B cell (primary cell): ENCODE measurements at regions of chr4 and their contacts with region 1.

Region 1: GRCh38 chr4:85701861-85702321 is 226.9 kb downstream of the ARHGAP24 start:
- DNase-seq: peak; percentile 82
- ATAC-seq: peak; percentile 88
- H3K4me3 ChIP-seq: peak overlapping the region in 3 of 5 experiments; percentile 17 to 53 (median 25)
- H3K4me3 Mint-ChIP-seq: peak overlapping the region; percentile 73
- H3K27ac ChIP-seq: peak overlapping the region; percentile 85 to 86
- H3K27ac Mint-ChIP-seq: peak overlapping the region; percentile 92
- H3K4me1 ChIP-seq: peaks cover 59 to 60% of the 10 kb centered on the region in 2 donors
- H3K4me1 Mint-ChIP-seq: peaks cover 64% of the 10 kb centered on the region
- H3K27me3 ChIP-seq: no peaks in the 10 kb centered on the region
- H3K27me3 Mint-ChIP-seq: no peaks in the 10 kb centered on the region
- CTCF ChIP-seq: no peak

Region 2: DNA sequence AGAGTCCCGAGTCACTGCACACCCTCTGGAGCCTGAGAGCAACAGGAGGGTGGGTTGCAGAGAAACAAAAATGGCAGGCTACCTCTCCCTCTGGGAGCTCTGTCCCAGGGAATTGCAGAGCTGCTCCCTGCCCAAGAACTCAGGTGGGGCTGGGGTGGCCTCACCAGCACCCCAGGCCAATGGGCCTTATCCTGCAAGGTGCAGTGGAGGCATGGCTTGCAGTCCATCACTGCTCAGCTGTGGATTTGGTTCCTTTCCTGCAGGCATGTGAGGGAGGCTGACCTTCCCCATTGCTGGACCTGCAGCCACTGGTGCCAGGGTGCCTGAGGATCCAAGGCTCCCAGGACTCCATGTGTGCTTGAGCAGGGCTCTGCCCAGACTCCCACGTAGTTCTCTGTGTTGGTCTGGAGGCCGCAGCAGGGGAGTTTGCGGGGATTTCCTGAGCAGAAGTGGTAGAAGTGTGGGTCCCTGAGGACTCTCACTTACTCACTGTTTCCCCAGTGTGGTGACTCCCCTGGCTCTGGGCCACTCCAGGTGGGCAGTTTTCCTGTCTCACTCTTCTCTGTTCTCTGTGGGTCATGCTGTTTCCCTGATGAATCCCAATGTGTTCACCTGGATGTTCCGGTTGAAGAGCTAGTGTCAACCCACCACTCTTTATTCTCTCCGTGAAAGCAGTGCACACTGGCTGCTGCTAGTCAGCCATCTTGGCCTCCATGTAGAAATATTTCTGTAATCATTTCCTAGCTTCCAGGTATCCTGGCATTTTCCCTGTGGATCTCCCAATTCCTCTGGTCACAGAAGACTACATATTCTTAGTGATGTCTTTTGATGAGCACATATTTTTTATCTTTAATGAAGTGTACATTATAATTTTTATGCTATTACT is 144.6 kb before region 1 on chr4:
- CTCF ChIA-PET with region 1: no interaction called
- POLR2A ChIA-PET with region 1: no interaction called
- intact Hi-C with region 1: loop called (anchors 1 kb)
- DNase-seq: peak; percentile 93
- ATAC-seq: peak; percentile 86
- H3K4me3 ChIP-seq: peak overlapping the region in 2 of 5 experiments; percentile 12 to 14
- H3K4me3 Mint-ChIP-seq: peak overlapping the region; percentile 66
- H3K27ac ChIP-seq: peak overlapping the region; percentile 92 to 95
- H3K27ac Mint-ChIP-seq: peak overlapping the region; percentile 96
- H3K4me1 ChIP-seq: peaks cover 61 to 62% of the 10 kb centered on the region in 2 donors
- H3K4me1 Mint-ChIP-seq: peaks cover 72% of the 10 kb centered on the region
- H3K27me3 ChIP-seq: no peaks in the 10 kb centered on the region
- H3K27me3 Mint-ChIP-seq: no peaks in the 10 kb centered on the region
- CTCF ChIP-seq: no peak

Region 3: GRCh38 chr4:85603437-85604336 is 98.2 kb before region 1 on chr4:
- CTCF ChIA-PET with region 1: no interaction called
- POLR2A ChIA-PET with region 1: no interaction called
- intact Hi-C with region 1: loop called (anchors 5 kb)
- DNase-seq: peak; percentile 72
- ATAC-seq: peak; percentile 42
- H3K4me3 ChIP-seq: peak overlapping the region in 1 of 5 experiments; percentile 6
- H3K4me3 Mint-ChIP-seq: peak overlapping the region; percentile 62
- H3K27ac ChIP-seq: peak overlapping the region; percentile 60 to 91
- H3K27ac Mint-ChIP-seq: peak overlapping the region; percentile 86
- H3K4me1 ChIP-seq: peaks cover 45 to 46% of the 10 kb centered on the region in 2 donors
- H3K4me1 Mint-ChIP-seq: peaks cover 40% of the 10 kb centered on the region
- H3K27me3 ChIP-seq: no peaks in the 10 kb centered on the region
- H3K27me3 Mint-ChIP-seq: no peaks in the 10 kb centered on the region
- CTCF ChIP-seq: no peak

Region 4: DNA sequence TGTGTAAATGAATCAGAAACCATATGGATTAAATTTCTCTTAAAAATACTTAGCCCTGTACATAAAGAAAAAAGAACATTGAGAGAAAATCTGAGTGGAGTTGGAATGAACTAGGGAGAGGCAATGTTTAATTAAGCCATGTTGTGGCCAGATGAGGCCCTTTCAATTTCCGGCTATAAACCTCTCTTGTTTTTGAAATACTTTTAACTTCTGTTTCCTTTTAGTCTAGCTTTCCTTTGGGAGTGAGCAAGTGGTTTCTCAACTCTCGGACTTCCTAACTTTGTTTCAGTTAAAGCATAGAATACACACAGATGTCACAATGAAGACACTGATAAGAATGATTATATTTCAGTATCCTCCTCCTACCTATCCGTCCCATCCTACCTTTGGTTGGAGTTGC is 29.8 kb before region 1 on chr4:
- CTCF ChIA-PET with region 1: interaction called, 7 read pairs
- POLR2A ChIA-PET with region 1: no interaction called
- intact Hi-C with region 1: loop called (anchors 5 kb)
- DNase-seq: no peak
- ATAC-seq: no peak
- H3K4me3 ChIP-seq: peak overlapping the region in 1 of 5 experiments; percentile 22
- H3K4me3 Mint-ChIP-seq: peak overlapping the region; percentile 35
- H3K27ac ChIP-seq: peak overlapping the region; percentile 42 to 65
- H3K27ac Mint-ChIP-seq: peak overlapping the region; percentile 51
- H3K4me1 ChIP-seq: peaks cover 69 to 72% of the 10 kb centered on the region in 2 donors
- H3K4me1 Mint-ChIP-seq: peaks cover 76% of the 10 kb centered on the region
- H3K27me3 ChIP-seq: no peaks in the 10 kb centered on the region
- H3K27me3 Mint-ChIP-seq: no peaks in the 10 kb centered on the region
- CTCF ChIP-seq: no peak

Region 5: DNA sequence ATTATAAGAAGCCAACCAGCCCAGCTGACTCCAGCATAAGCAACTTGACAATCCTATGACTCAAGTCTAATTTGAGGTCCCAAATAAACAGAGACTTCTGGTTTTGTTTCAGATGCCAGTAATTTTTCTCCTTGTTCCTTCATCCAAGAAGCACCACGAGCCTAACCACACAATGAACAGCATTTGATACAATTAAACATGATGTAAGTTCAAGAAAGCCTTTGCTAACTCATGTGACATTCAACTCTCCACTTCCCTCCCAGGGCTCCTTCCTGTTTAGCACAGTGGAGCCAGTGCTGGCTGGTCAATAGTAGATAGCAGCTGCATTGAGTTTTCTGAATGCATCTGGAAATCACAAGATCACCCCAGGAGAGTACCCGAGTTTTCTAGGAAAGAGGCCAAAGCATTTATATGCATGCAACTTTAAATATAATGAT is 20.7 kb before region 1 on chr4:
- CTCF ChIA-PET with region 1: interaction called, 7 read pairs
- POLR2A ChIA-PET with region 1: no interaction called
- intact Hi-C with region 1: loop called (anchors 2 kb)
- DNase-seq: peak; percentile 66
- ATAC-seq: peak; percentile 70
- H3K4me3 ChIP-seq: no peak overlapping the region
- H3K4me3 Mint-ChIP-seq: peak overlapping the region; percentile 57
- H3K27ac ChIP-seq: peak overlapping the region; percentile 69 to 84
- H3K27ac Mint-ChIP-seq: peak overlapping the region; percentile 86
- H3K4me1 ChIP-seq: peaks cover 45 to 50% of the 10 kb centered on the region in 2 donors
- H3K4me1 Mint-ChIP-seq: peaks cover 56% of the 10 kb centered on the region
- H3K27me3 ChIP-seq: no peaks in the 10 kb centered on the region
- H3K27me3 Mint-ChIP-seq: no peaks in the 10 kb centered on the region
- CTCF ChIP-seq: no peak

Region 6: DNA sequence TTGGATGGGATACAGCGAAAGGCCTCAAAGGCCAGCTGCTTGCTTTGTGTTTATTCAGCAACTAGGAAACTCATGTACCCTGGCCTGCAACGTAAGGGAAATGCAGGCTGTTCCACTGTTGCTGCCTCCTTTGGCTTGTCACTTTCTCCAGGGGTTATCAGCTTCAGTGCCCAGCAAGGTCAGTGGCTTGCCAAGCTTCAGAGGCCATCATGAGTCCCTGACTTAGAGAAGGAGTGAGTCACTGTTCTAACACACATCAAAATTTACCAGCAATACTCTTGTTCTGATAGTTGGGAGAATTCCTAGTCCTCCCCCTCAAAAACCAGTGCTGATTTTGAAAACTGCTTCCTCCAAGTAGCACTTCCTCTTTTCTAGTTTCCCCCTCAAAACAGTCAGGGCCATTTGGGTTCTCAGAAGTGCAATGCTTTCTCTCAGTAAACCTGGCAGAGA is 23.9 kb after region 1 on chr4:
- CTCF ChIA-PET with region 1: interaction called, 6 read pairs
- POLR2A ChIA-PET with region 1: no interaction called
- intact Hi-C with region 1: loop called (anchors 1 kb)
- DNase-seq: peak; percentile 80
- ATAC-seq: peak; percentile 87
- H3K4me3 ChIP-seq: peak overlapping the region in 1 of 5 experiments; percentile 34
- H3K4me3 Mint-ChIP-seq: peak overlapping the region; percentile 66
- H3K27ac ChIP-seq: peak overlapping the region; percentile 74 to 82
- H3K27ac Mint-ChIP-seq: peak overlapping the region; percentile 94
- H3K4me1 ChIP-seq: peaks cover 24 to 26% of the 10 kb centered on the region in 2 donors
- H3K4me1 Mint-ChIP-seq: peaks cover 32% of the 10 kb centered on the region
- H3K27me3 ChIP-seq: no peaks in the 10 kb centered on the region
- H3K27me3 Mint-ChIP-seq: no peaks in the 10 kb centered on the region
- CTCF ChIP-seq: no peak